Cardiac septum (tissue), 1 donor: ENCODE measurements at regions of chr2 and their contacts with region 1.

Region 1: GRCh38 chr2:60504049-60504448 is 49.4 kb downstream of the BCL11A start:
- DNase-seq: no peak

Region 2: DNA sequence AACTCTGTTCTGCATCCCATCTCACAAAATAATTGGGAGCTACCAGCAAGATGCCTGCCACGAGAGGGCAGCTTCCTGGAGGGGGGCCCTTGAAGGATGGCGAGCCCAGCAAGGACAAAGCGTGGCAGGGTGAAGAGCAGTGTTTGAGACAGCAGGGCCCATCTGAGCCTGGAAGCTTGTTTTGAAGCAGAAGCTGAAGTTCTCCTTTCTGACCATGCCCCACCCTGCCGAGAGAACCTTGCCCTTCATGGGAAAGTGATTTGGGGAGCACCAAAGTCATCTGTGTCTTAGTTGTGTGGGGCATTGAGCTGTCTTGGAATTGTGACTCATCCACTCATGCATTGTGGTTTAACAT is 166.9 kb before region 1 on chr2:
- intact Hi-C with region 1: loop called (anchors 10 kb)
- DNase-seq: no peak

Region 3: DNA sequence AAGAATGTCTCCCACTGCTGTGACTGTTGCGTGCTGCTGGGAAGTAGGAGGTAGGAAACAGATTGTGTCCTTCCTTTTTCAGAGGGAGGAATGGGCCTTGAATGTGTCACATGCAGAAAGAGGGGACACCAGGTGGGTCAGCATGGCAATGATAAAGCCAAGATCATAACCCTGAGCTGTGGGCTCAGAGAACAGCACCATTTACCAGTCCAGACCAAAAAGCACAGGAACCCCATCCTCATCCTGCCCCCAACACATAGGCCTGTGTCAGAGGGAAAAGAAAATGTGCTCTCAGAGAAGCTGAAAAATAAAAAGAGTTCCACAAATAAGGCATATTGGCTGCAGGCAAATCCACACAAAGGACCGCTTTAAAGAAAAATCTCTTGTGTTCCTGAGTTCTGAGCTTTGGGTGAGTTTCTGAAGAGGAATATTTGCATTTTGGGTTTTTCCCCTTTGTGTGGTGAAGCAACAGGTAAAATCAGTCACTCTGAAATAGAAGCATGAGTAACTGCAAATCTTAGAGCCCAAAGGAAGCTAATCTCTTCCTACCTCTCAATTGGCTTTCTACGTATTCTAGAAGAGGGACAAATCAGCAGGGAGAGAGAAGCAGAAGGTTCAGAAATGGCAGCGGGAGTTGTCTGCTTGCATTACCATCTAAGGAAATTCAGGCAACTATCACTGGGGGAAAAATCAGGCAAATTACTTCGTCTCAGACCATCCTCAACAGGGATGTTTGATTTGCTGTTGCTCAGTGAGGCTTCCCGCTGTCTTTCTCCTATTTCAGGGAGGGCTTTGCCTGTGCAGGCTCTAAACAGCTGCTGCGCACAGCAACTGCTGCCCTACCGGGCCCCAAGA is 57.4 kb before region 1 on chr2:
- intact Hi-C with region 1: no loop called
- DNase-seq: no peak

Region 4: DNA sequence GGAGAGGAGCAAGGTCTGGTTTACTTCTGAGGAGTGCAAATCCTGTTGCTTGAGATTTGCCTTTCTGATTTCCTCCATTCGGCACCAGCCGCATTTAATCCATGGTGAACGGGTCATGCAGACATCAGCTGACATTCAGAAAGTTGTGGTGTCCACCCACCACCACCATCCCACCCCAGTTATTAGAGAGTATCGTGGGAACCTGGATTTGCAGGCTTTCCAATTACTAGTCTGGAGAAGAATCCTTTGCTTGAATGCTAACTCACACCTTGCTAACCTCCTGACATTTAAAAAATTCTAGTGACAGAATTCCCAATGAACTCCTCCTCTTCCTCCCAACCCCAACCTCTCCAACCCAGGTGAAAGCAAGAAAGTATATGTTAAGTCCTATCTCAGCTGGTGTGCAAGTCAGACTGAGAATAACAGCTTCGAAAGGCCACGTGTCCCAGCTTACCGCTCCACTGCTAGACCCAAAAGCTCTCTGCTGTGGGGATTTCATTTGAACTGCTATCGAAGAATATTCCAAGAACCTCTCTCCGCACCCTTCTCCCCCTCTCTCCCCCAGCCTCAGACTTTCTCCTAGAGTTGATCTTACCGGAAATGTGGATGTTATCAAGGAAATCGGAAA is 31.8 kb after region 1 on chr2:
- intact Hi-C with region 1: loop called (anchors 5 kb)
- DNase-seq: no peak

Region 5: DNA sequence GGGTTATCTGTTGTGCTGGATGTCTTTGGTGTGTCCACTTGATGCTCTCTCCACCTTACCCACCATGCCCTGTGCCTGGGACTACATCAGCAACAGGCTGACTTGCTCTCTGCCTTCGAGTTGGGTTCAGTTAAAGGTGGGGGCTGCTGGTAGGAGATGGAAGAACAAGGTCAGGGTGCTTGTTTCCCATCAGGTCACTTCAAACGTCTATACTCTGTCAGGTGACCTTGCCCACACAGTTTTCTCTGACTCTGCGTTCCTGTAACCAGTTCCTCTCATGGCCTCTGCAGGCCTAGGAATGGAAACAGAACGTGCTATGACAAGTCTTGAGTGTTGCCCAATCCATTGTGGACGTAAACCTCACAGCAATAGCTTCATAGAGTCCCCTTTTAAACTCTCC is 213.6 kb after region 1 on chr2:
- intact Hi-C with region 1: no loop called
- DNase-seq: no peak